K562 (cell line): ENCODE measurements at regions of chr11 and their contacts with region 1.

Region 1: GRCh38 chr11:112113539-112114457 is 27.1 kb downstream of the SDHD start:
- DNase-seq: peak; percentile 53 to 74 (median 66)
- ATAC-seq: peak; percentile 90
- H3K4me3 ChIP-seq: no peak overlapping the region
- H3K27ac ChIP-seq: no peak overlapping the region
- H3K4me1 ChIP-seq: 0 out of 5 replicates have a peak, but pooled peaks cover 0 to 6% of the 10 kb centered on the region in 2 experiments
- H3K27me3 ChIP-seq: no peaks in the 10 kb centered on the region
- CTCF ChIP-seq: peak; percentile 57 to 72 (median 64); a peak in 4 of 6 replicates
- EP300 ChIP-seq: no peak
- POLR2A ChIP-seq: no peak
- RAD21 ChIP-seq: peak; percentile 46 to 67

Region 2: DNA sequence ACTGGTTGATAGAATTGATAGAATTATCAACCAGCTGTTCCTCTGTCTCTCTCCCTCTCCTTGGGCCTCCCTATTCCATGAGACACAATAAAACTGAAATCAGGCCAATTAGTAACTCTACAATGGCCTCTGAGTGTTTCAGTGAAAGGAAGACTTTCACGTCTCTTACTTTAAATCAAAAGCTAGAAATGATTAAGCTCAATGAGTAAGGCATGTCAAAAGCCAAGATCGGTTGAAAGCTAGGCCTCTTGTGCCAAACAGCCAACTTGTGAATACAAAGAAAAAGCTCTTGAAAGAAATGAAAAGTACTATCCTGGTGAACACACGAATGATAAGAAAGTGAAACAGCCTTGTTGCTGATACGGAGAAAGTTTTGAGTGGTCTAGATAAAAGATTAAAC is 56.6 kb before region 1 on chr11:
- CTCF ChIA-PET with region 1: no interaction called
- POLR2A ChIA-PET with region 1: no interaction called
- in situ Hi-C with region 1: no loop called
- intact Hi-C with region 1: no loop called
- DNase-seq: no peak
- ATAC-seq: no peak
- H3K4me3 ChIP-seq: no peak overlapping the region
- H3K27ac ChIP-seq: no peak overlapping the region
- H3K4me1 ChIP-seq: no peaks in the 10 kb centered on the region
- H3K27me3 ChIP-seq: no peaks in the 10 kb centered on the region
- CTCF ChIP-seq: no peak
- EP300 ChIP-seq: no peak
- POLR2A ChIP-seq: no peak
- RAD21 ChIP-seq: no peak

Region 3: GRCh38 chr11:112156956-112157766 is 43.4 kb after region 1 on chr11:
- CTCF ChIA-PET with region 1: no interaction called
- POLR2A ChIA-PET with region 1: no interaction called
- in situ Hi-C with region 1: no loop called
- intact Hi-C with region 1: loop called (anchors 5 kb)
- DNase-seq: no peak
- ATAC-seq: no peak
- H3K4me3 ChIP-seq: no peak overlapping the region
- H3K27ac ChIP-seq: no peak overlapping the region
- H3K4me1 ChIP-seq: peaks cover 4 to 6% of the 10 kb centered on the region in 2 experiments; a peak in 2 of 5 replicates
- H3K27me3 ChIP-seq: no peaks in the 10 kb centered on the region
- CTCF ChIP-seq: no peak
- EP300 ChIP-seq: no peak
- POLR2A ChIP-seq: no peak
- RAD21 ChIP-seq: no peak

Region 4: GRCh38 chr11:112174789-112175598 is 61.2 kb after region 1 on chr11 and contains the start of gene BCO2:
- CTCF ChIA-PET with region 1: interaction called, 3 read pairs
- POLR2A ChIA-PET with region 1: no interaction called
- in situ Hi-C with region 1: no loop called
- intact Hi-C with region 1: loop called (anchors 1 kb)
- DNase-seq: peak; percentile 57 to 82 (median 70)
- ATAC-seq: peak; percentile 96
- H3K4me3 ChIP-seq: no peak within 1 kb of the TSS
- H3K27ac ChIP-seq: no peak within 1 kb of the TSS
- H3K4me1 ChIP-seq: peaks cover 0 to 8% of the 10 kb centered on the region in 2 experiments; a peak in 2 of 5 replicates
- H3K27me3 ChIP-seq: peaks cover 0 to 8% of the 10 kb centered on the region in 2 experiments; a peak in 2 of 5 replicates
- CTCF ChIP-seq: peak; percentile 69 to 92 (median 85)
- EP300 ChIP-seq: no peak
- POLR2A ChIP-seq: no peak
- RAD21 ChIP-seq: peak; percentile 55 to 81
- polyA plus RNA-seq, gene BCO2: 0.21 to 0.24 TPM

Region 5: DNA sequence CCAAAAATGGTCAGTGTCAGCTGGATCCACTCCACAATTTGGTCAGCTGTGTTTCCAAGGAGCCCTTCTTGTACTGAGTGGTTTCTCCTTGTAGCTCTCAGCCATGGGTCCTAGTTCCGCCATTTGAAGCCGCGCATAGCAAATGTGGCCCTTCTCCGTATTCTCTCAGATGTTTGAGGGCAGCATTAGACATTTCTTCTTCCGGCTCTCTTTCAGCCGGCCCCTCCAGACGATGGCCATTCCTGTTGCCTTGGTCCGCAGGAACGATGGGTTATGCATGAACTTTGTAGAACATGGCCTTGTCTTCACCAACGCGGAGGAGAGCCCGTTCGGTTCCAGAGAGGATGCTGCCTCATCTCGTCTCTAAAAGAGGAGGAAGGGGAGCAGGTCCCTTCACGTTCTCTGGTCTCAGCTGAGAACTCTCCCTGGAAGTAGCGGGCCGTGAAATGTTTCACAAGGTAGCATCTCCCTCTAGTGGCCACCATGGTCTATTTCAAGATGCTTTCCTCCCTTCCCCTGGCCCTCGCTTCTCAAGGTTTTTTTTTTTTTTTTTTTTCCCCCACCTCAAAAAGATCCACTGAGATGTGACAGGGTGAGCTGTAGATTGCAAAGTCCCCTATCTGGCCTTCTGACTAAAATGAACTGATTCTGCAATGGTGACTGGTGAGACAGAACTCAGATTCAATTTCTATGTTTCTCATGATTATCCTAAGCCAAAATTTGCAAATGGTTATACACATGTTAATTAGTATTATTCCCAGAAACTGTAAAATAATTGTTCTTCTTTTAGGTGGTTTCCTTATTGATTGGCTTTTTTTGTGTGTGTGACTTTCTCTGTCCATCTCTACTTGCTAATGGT is 166.7 kb after region 1 on chr11:
- CTCF ChIA-PET with region 1: interaction called, 13 read pairs
- POLR2A ChIA-PET with region 1: no interaction called
- in situ Hi-C with region 1: loop called (anchors 10 kb)
- intact Hi-C with region 1: loop called (anchors 2 kb)
- DNase-seq: peak; percentile 76 to 87 (median 78)
- ATAC-seq: peak; percentile 94
- H3K4me3 ChIP-seq: peak overlapping the region; percentile 23; the same call in 1 of the 2 replicates
- H3K27ac ChIP-seq: no peak overlapping the region
- H3K4me1 ChIP-seq: peaks cover 18 to 19% of the 10 kb centered on the region in 2 experiments
- H3K27me3 ChIP-seq: peaks cover 0 to 7% of the 10 kb centered on the region in 2 experiments; a peak in 1 of 5 replicates
- CTCF ChIP-seq: peak; percentile 78 to 89 (median 84)
- EP300 ChIP-seq: no peak
- POLR2A ChIP-seq: no peak
- RAD21 ChIP-seq: peak; percentile 72 to 81